ENCODE measurements at regions of chr15 and their contacts with region 1.

Region 1: GRCh38 chr15:85485956-85486567 is 105.7 kb downstream of the AKAP13 start:
- DNase-seq: peak; percentile 59
- ATAC-seq: peak; percentile 69
- H3K4me3 ChIP-seq: no peak overlapping the region
- H3K27ac ChIP-seq: no peak overlapping the region
- H3K4me1 ChIP-seq: peaks cover 35% of the 10 kb centered on the region
- H3K27me3 ChIP-seq: no peaks in the 10 kb centered on the region
- CTCF ChIP-seq: peak; percentile 64 to 76 (median 67)
- EP300 ChIP-seq: no peak
- POLR2A ChIP-seq: no peak
- RAD21 ChIP-seq: peak; percentile 86

Region 2: DNA sequence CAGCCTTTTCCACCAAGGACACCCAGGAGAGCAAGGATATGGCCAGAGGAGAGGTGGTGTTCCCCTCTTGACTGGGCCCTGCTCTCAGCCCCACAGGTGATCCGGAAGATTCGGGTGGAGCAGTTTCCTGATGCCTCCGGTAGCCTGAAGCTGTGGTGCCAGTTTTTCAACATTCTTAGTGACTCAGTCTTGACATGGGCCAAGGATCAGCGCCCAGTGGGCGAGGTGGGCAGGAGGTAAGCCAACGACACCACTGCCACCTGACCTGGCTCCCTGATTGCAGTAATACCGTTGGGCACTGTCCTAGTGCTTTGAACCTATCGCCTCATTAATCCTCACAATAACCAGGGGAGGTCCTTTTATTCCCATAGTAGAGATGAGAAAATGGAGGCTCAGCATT is 626.9 kb before region 1 on chr15:
- CTCF ChIA-PET with region 1: no interaction called
- POLR2A ChIA-PET with region 1: no interaction called
- RAD21 ChIA-PET with region 1: no interaction called
- SMC1A ChIA-PET with region 1: no interaction called
- in situ Hi-C with region 1: no loop called
- intact Hi-C with region 1: no loop called
- DNase-seq: no peak
- ATAC-seq: no peak
- H3K4me3 ChIP-seq: no peak overlapping the region
- H3K27ac ChIP-seq: no peak overlapping the region
- H3K4me1 ChIP-seq: no peaks in the 10 kb centered on the region
- H3K27me3 ChIP-seq: peaks cover 0 to 2% of the 10 kb centered on the region in 2 experiments; a peak in 3 of 4 replicates
- CTCF ChIP-seq: no peak
- EP300 ChIP-seq: no peak
- POLR2A ChIP-seq: no peak
- RAD21 ChIP-seq: no peak

Region 3: DNA sequence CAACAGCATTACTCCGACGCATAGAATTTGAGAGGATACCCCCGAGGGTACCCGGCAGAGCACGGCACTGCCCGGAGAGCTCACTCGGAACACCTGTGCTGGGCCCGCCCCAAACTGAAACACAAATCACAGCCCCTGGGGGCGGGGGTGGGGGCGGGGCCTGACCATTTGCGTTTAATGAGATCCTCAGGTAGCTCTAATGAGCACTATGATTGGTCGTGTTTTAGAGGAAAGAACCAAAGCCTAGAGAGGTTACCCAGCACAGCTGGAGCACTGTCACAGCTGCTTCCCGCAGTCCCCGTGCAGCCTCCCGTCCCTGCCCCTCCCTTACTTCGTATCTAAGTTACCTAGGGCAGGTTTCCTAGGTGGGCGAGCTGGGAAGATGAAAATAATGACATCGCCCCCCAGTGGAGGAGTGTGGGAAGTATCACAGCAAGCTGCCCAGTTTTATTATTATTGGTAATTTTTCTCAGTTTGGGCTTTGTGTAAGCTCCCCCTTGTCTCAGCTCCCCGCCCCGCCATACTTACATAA is 317.4 kb before region 1 on chr15:
- CTCF ChIA-PET with region 1: no interaction called
- POLR2A ChIA-PET with region 1: no interaction called
- RAD21 ChIA-PET with region 1: no interaction called
- SMC1A ChIA-PET with region 1: no interaction called
- in situ Hi-C with region 1: no loop called
- intact Hi-C with region 1: no loop called
- DNase-seq: no peak
- ATAC-seq: peak; percentile 56
- H3K4me3 ChIP-seq: no peak overlapping the region
- H3K27ac ChIP-seq: no peak overlapping the region
- H3K4me1 ChIP-seq: no peaks in the 10 kb centered on the region
- H3K27me3 ChIP-seq: peaks cover 0 to 4% of the 10 kb centered on the region in 2 experiments; a peak in 1 of 4 replicates
- CTCF ChIP-seq: peak; percentile 27 to 55 (median 36)
- EP300 ChIP-seq: no peak
- POLR2A ChIP-seq: no peak
- RAD21 ChIP-seq: peak; percentile 52

Region 4: DNA sequence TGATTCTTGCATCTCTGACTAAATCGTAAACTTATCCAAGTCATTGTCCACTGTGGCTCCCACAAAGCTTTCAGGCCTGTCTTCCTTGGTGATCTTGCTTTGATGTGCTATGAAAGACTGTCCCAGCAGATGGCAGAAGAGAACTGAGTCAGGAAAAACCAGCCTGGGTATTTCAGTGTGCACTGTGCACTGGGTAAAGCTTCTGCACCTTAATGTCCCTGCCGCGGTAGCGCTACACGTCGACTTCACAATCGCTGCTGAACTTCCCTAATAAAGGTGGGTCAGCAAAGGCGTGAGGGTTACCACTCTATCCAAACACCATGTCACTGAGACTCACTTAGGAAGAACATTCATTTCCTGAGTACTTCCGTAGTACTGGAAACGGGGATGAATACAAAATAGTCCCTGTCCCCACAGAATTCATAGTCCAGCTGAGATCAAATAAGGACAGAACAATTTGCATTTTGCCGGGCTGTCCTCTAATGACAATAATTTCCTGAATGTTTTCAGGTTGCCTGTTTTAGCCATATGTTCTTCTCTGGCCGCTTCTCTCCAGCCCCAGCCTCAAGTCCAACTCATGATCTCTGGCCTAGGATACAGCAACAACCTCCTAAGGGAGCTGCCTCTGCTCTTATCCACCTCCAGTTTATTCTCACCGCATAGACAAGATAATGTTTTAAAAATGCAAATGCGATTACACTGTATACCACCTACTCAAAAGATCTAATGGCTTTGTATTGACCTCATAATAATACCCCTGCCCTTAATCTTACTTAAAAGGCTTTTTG is 189.3 kb before region 1 on chr15:
- CTCF ChIA-PET with region 1: interaction called, 24 read pairs
- POLR2A ChIA-PET with region 1: no interaction called
- RAD21 ChIA-PET with region 1: interaction called, 6 read pairs
- SMC1A ChIA-PET with region 1: interaction called, 30 read pairs
- in situ Hi-C with region 1: no loop called
- intact Hi-C with region 1: loop called (anchors 5 kb)
- DNase-seq: peak; percentile 68
- ATAC-seq: peak; percentile 98
- H3K4me3 ChIP-seq: no peak overlapping the region
- H3K27ac ChIP-seq: no peak overlapping the region
- H3K4me1 ChIP-seq: no peaks in the 10 kb centered on the region
- H3K27me3 ChIP-seq: no peaks in the 10 kb centered on the region; a peak in 1 of 4 replicates
- CTCF ChIP-seq: peak; percentile 76 to 79 (median 77)
- EP300 ChIP-seq: no peak
- POLR2A ChIP-seq: no peak
- RAD21 ChIP-seq: peak; percentile 97

Region 5: DNA sequence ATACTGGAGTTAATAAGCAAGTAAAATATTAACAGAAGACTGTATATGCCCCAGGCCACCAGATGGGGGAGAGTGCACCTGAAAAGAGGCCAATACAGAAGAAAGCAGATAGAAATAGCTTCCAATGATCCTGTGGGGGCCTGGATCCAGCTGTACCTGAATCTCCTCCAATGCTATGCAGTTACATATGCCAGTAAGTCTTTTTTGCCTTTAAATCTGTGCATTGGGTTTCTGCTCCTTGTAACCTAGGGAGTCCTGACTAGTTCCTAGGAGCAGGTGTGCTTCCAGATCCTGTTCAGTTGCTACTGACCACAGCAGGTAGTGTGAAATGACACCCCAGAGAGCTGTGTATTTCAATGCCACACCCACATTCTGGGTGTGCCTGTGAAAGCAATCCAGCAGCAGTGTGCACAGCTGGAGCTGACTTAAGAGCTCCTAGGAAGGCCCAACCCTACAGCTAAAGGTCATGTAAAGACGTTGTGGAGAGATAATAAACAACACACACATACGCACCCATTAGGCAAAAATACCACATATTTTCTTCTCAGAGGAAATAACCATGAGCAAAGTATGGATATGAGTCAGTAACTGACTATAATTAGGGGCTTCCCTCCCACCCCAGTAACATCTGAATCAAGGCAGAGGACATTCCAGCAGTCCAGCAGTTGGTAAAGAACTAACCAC is 167.9 kb before region 1 on chr15:
- CTCF ChIA-PET with region 1: interaction called, 3 read pairs
- POLR2A ChIA-PET with region 1: interaction called, 5 read pairs
- RAD21 ChIA-PET with region 1: interaction called, 3 read pairs
- SMC1A ChIA-PET with region 1: interaction called, 12 read pairs
- in situ Hi-C with region 1: no loop called
- intact Hi-C with region 1: no loop called
- DNase-seq: peak; percentile 83
- ATAC-seq: peak; percentile 97
- H3K4me3 ChIP-seq: no peak overlapping the region
- H3K27ac ChIP-seq: peak overlapping the region; percentile 60
- H3K4me1 ChIP-seq: peaks cover 32% of the 10 kb centered on the region
- H3K27me3 ChIP-seq: no peaks in the 10 kb centered on the region
- CTCF ChIP-seq: peak in 2 of 3 experiments; percentile 19 to 28; a peak in 2 of 6 replicates
- EP300 ChIP-seq: peak; percentile 96 to 97
- POLR2A ChIP-seq: no peak
- RAD21 ChIP-seq: peak; percentile 45

Region 6: DNA sequence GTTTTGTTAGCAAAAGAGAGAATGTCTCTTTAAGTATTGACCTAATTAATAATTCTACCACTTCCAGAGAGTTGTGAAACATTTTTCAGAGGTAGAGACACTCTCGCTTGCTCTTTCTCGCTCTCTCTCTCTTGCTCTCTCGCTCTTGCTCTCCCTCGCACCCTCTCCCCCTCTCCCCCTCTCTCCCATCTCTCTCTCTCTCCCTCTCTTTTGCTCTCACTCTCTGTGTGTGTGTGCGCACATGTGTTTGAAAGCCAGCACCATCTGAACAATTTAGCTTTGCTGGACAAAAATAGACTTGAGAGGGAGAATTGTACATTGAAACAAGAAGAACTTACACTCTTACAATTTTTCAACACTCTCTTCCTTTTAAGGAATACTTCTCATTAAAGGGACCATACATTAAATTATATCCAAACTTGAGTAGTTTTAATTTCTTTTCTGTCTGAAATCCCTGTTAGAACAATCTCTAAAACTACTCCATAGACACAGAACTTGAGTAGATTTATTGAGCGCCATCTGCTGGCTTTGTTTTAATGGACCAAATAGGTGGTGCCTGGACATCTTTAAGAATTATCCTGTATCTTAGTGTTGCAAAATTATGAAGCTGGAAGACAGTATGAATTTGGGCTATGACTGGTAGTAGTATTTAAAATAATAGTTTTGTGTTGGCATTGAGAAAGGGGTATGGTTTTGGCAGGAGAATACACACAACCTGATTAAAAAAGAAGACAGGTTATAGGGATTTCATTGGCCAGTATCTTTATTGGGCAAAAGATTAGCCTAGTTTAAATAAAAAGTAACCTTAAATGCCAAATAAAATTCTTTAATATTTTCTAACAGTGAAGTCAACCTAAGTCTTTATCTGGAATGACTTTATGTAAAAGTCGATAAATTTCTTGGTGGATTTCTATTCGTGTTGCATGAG is 19.0 kb after region 1 on chr15:
- CTCF ChIA-PET with region 1: interaction called, 170 read pairs
- POLR2A ChIA-PET with region 1: interaction called, 6 read pairs
- RAD21 ChIA-PET with region 1: interaction called, 75 read pairs
- SMC1A ChIA-PET with region 1: interaction called, 147 read pairs
- in situ Hi-C with region 1: no loop called
- intact Hi-C with region 1: loop called (anchors 1 kb)
- DNase-seq: no peak
- ATAC-seq: peak; percentile 86
- H3K4me3 ChIP-seq: no peak overlapping the region
- H3K27ac ChIP-seq: no peak overlapping the region
- H3K4me1 ChIP-seq: peaks cover 18% of the 10 kb centered on the region
- H3K27me3 ChIP-seq: no peaks in the 10 kb centered on the region
- CTCF ChIP-seq: peak; percentile 38 to 59 (median 55); a peak in 5 of 6 replicates
- EP300 ChIP-seq: no peak
- POLR2A ChIP-seq: no peak
- RAD21 ChIP-seq: peak; percentile 63

Region 7: DNA sequence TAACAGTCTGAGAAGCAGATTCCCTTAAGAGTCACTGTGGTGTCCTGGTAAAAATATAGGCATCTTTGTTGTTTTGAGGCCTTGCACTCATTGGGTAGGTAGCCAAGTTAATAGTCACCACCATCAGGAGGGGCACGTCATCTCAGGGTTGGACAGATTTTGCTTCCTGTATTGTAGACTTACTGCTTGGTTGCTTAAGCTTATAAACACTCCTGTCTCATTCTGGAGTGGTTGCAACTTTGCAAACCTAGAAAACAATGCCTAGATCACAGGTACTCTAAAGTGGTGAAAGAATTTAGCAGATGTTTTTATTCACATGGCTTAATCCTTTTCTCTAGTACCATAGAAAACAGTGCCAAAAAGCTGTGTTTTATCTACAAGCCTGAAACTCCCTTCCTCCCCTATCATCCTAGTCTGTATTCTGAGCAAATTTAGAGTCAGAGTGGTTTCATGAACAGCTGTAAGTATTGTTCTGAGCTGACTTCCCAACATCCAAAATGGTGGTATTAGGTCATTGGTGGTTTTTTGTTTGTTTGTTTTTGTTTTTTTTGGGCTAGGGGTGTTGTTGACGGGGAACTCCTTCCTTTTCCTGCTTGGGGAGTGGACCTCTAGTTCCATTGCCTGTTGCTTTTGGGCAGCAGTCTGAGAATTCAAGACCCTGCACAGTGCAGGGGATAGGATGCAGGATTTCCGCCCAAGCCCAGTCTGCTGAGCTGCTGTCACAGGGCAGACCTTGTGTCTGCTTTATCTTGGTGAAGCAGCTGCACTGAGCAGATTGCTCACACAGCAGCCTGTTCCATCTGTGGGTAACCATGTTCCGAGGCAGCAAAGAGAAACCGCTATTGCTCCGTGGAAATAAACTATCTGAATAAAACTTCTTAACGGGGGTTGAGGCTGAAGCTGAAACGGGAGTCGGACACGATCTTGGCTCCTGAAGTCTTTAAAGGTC is 96.3 kb after region 1 on chr15:
- CTCF ChIA-PET with region 1: interaction called, 6 read pairs
- POLR2A ChIA-PET with region 1: interaction called, 3 read pairs
- RAD21 ChIA-PET with region 1: interaction called, 8 read pairs
- SMC1A ChIA-PET with region 1: interaction called, 16 read pairs
- in situ Hi-C with region 1: no loop called
- intact Hi-C with region 1: loop called (anchors 1 kb)
- DNase-seq: peak; percentile 34
- ATAC-seq: peak; percentile 51
- H3K4me3 ChIP-seq: peak overlapping the region; percentile 63
- H3K27ac ChIP-seq: peak overlapping the region; percentile 82
- H3K4me1 ChIP-seq: peaks cover 63% of the 10 kb centered on the region
- H3K27me3 ChIP-seq: no peaks in the 10 kb centered on the region
- CTCF ChIP-seq: no peak
- EP300 ChIP-seq: no peak
- POLR2A ChIP-seq: peak; percentile 81
- RAD21 ChIP-seq: no peak

Region 8: DNA sequence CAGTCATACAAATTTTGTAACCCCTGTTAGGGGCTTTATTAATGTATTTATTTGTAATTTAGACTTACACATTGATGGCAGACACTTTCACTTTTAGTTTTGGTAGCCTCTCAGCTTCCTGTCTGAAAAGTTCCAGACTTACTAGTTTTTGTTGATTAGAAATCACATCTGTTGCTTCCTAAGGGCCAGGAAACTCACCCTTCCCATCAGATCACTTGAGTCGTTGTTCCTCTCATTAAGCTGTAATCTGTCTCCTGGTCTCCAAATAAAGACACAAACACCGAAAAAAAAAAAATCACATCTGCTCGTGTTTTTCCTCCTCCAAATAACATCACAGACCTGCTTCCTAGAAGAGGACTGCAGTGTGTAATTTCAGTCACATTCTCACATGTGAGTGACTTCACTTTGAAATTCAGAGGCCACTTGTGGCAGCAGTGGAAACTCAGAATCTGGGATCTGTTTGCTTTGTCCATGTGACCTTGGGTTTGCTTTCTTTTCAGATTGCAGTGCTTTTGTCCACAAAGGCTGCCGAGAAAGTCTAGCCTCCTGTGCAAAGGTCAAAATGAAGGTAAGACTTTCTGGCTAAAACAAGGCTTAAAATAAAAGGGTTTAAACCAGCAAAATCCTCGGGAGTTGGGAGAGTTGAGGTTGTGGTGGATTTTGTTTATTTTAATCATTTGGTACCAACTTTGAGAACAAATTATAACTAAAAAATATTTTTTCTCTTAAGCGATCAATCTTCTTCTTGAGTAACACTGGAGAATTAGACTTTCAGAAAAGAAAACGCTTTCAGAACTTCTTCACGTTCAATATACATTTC is 221.7 kb after region 1 on chr15:
- CTCF ChIA-PET with region 1: interaction called, 6 read pairs
- POLR2A ChIA-PET with region 1: interaction called, 3 read pairs
- RAD21 ChIA-PET with region 1: interaction called, 6 read pairs
- SMC1A ChIA-PET with region 1: interaction called, 4 read pairs
- in situ Hi-C with region 1: no loop called
- intact Hi-C with region 1: loop called (anchors 5 kb)
- DNase-seq: no peak
- ATAC-seq: peak; percentile 5
- H3K4me3 ChIP-seq: peak overlapping the region; percentile 60
- H3K27ac ChIP-seq: peak overlapping the region; percentile 99
- H3K4me1 ChIP-seq: peaks cover 66% of the 10 kb centered on the region
- H3K27me3 ChIP-seq: no peaks in the 10 kb centered on the region
- CTCF ChIP-seq: no peak
- EP300 ChIP-seq: no peak
- POLR2A ChIP-seq: no peak
- RAD21 ChIP-seq: no peak

Measured in GM12878 (cell line).